Colonic mucosa (tissue), 4 donors: ENCODE measurements at regions of chr5 and their contacts with region 1.

Region 1: DNA sequence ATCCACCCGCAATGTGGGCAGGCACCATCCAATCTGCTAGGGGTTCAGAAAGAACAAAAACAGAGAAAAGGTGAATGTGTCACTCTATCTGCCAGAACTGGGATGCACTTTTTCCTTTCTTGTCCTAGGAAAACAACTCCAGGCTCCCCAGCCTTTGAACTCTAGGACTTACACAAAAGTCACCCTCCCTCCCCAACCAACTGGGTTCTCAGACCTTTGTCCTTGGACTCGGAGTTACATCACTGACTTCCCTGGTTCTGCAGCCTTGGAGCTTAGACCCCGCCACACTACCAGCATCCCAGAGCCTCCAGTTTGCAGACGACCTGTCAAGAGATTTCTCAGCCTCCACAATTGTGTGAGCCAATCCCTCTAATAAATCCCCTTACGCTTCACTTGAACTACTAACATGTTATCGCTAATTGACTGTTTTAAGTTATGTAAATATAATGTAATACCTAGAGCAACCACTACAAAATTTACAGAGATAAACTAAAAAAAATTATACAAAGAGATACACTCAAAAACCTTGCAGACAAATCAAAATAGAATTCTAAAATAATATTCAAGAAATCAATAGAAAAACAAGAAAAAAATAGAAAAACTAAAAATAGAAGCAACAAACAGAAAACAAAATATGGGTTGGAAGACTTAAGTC is 5.3 kb upstream of the UBLCP1 start:
- DNase-seq: no peak
- H3K4me3 ChIP-seq: no peak overlapping the region
- H3K27ac ChIP-seq: no peak overlapping the region
- H3K4me1 ChIP-seq: no peaks in the 10 kb centered on the region
- H3K27me3 ChIP-seq: no peaks in the 10 kb centered on the region
- CTCF ChIP-seq: no peak

Region 2: DNA sequence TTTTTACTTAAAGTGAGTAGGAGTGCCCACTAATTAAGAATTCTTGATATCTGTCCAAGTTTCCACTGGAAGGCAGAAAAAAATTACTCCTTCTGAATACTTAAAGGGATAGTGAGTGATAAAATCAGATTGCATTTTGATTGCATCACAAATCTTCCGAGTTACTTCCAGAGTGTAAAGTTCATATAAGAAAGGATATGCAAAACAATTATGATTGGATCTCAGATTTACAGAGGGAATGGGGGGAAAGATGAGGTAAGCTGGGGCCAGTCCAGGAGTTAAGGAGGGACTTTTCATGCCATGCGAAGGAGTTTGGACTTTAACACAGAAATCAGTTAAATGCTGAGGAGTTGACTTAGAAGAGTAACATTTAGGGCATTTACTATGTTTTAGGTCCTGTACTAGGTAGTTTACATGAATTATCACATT is 39.1 kb before region 1 on chr5:
- intact Hi-C with region 1: loop called (anchors 5 kb)
- DNase-seq: no peak
- H3K4me3 ChIP-seq: no peak overlapping the region
- H3K27ac ChIP-seq: no peak overlapping the region
- H3K4me1 ChIP-seq: no peaks in the 10 kb centered on the region
- H3K27me3 ChIP-seq: no peaks in the 10 kb centered on the region
- CTCF ChIP-seq: no peak